ENCODE measurements at regions of chr17 and their contacts with region 1.

Region 1: GRCh38 chr17:71251951-71252350 is 868.9 kb upstream of the SOX9 start:
- DNase-seq: no peak
- H3K4me3 ChIP-seq: no peak overlapping the region
- H3K27ac ChIP-seq: no peak overlapping the region
- H3K4me1 ChIP-seq: no peaks in the 10 kb centered on the region
- H3K27me3 ChIP-seq: no peaks in the 10 kb centered on the region
- CTCF ChIP-seq: no peak

Region 2: DNA sequence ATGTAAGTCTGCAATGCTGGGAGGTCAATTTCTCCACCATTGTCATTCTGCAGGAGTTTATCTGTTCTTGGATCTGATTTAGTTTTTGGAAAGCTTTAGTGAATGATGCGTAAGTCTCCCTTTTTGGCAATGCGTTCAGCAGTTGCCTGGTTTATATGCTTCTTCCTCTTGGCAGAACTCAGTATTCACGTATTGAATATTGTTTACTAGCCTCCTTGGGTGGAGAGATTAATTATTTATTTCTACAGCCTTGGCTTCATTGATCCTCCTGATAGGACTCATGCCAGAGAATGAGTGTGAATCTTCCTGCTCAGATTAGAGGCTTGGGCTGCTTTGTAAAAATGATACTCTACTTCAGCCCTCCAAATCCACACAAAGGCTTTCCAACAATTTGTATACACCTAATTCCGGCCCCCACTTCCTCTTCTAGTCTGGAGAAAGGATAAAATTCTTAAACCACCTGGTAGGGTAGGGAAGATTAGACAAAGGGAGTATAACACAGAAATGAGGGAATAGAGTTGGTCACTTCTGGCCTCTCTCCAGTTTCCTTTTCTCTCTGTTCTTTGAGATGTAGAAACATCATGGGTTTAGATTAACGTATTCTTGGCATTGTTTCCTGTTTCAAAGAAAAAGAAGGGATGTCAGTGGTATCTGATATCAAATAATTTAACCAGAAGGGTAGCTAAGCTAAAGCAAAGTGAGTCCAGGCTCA is 152.8 kb before region 1 on chr17:
- intact Hi-C with region 1: no loop called
- DNase-seq: no peak
- H3K4me3 ChIP-seq: no peak overlapping the region
- H3K27ac ChIP-seq: no peak overlapping the region
- H3K4me1 ChIP-seq: no peaks in the 10 kb centered on the region
- H3K27me3 ChIP-seq: no peaks in the 10 kb centered on the region
- CTCF ChIP-seq: no peak

Region 3: GRCh38 chr17:71192848-71193247 is 59.1 kb before region 1 on chr17:
- intact Hi-C with region 1: loop called (anchors 10 kb)
- DNase-seq: no peak
- H3K4me3 ChIP-seq: no peak overlapping the region
- H3K27ac ChIP-seq: no peak overlapping the region
- H3K4me1 ChIP-seq: no peaks in the 10 kb centered on the region
- H3K27me3 ChIP-seq: no peaks in the 10 kb centered on the region
- CTCF ChIP-seq: no peak

Measured in kidney (tissue), 22 donors.